ENCODE measurements at regions of chr3 and their contacts with region 1.

Region 1: DNA sequence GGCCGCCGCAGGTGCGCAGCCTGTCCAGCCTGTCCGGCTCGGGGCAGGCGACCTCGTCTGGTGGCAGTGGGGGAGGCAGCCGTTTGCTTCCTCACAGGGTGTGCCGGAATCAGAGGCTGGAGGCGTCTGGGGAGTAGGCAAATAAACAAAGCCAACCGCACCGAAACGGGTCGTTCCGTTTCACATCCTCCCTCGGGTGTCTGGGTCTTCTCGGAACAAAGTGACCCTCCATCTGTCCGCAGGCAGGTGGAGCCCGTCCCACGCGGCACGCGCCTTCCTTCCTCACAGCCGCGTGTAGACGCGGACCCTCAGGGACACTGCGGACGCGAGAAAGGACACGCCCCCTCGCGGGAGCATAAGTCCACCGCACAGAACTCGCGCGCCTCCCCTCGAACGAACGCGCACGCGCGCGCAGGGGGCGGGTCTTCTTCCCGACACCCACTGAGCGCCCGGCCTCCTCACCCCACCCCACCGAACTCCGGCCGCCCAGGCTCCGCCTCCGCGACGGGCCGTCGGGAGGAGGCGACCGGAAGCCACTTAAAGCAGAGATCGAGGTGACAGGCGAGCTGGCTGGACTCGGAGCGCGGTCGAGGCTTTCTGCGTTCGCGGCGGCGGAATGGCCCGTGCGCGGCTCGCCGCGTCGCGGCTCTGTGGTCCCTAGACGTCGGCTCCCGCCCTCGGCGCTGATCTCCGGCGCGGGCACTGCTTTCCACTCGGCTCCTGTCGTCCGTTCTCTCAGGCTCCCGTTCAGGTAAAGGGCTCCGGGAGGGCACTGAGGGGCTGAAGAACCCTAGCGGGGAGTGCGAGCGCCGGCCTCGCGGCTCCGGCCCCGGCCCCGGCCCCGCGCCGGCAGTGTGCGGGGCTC is at the start of gene TIPARP:
- DNase-seq: peak; percentile 98
- H3K4me3 ChIP-seq: peak within 1 kb of the TSS; percentile 61 to 94 (median 76)
- H3K27ac ChIP-seq: peak within 1 kb of the TSS; percentile 99
- H3K4me1 ChIP-seq: peaks cover 22% of the 10 kb centered on the region
- H3K27me3 ChIP-seq: no peaks in the 10 kb centered on the region
- CTCF ChIP-seq: peak; percentile 5 to 44
- total RNA-seq, gene TIPARP: 171 to 229 TPM

Region 2: GRCh38 chr3:156535162-156535627 is 139.1 kb before region 1 on chr3:
- CTCF ChIA-PET with region 1: no interaction called
- dilution Hi-C with region 1: no loop called
- in situ Hi-C with region 1: no loop called
- intact Hi-C with region 1: loop called (anchors 1 kb)
- DNase-seq: peak; percentile 93
- H3K4me3 ChIP-seq: no peak overlapping the region
- H3K27ac ChIP-seq: peak overlapping the region; percentile 3
- H3K4me1 ChIP-seq: peaks cover 11% of the 10 kb centered on the region
- H3K27me3 ChIP-seq: no peaks in the 10 kb centered on the region
- CTCF ChIP-seq: peak; percentile 10 to 23

Region 3: GRCh38 chr3:156576651-156577343 is 97.5 kb before region 1 on chr3:
- CTCF ChIA-PET with region 1: no interaction called
- dilution Hi-C with region 1: no loop called
- in situ Hi-C with region 1: no loop called
- intact Hi-C with region 1: loop called (anchors 1 kb)
- DNase-seq: no peak
- H3K4me3 ChIP-seq: no peak overlapping the region
- H3K27ac ChIP-seq: no peak overlapping the region
- H3K4me1 ChIP-seq: peaks cover 8% of the 10 kb centered on the region
- H3K27me3 ChIP-seq: no peaks in the 10 kb centered on the region
- CTCF ChIP-seq: peak in 1 of 2 donors; percentile 13

Region 4: GRCh38 chr3:156626104-156626503 is 48.2 kb before region 1 on chr3:
- CTCF ChIA-PET with region 1: no interaction called
- dilution Hi-C with region 1: no loop called
- in situ Hi-C with region 1: no loop called
- intact Hi-C with region 1: loop called (anchors 2 kb)
- DNase-seq: peak; percentile 92
- H3K4me3 ChIP-seq: no peak overlapping the region
- H3K27ac ChIP-seq: no peak overlapping the region
- H3K4me1 ChIP-seq: peaks cover 44% of the 10 kb centered on the region
- H3K27me3 ChIP-seq: no peaks in the 10 kb centered on the region
- CTCF ChIP-seq: no peak